Activated T-helper 1 cell treated with anti-CD3 and anti-CD28 coated beads, Interleukin-12 subunit alpha, Interleukin-12 subunit beta, Interleukin-2, Interleukin-4 antibody, amounts not matched to agents 30 ng/mL and 10 ng/mL and 1 ng/mL, durations not matched to agents 14 hours and 24 hours and 36 hours (primary cell): ENCODE measurements at regions of chr2 and their contacts with region 1.

Region 1: GRCh38 chr2:32356735-32357644 is at the start of gene BIRC6:
- DNase-seq: peak; percentile 92
- H3K4me3 Mint-ChIP-seq: peak within 1 kb of the TSS; percentile 89
- H3K27ac Mint-ChIP-seq: peak within 1 kb of the TSS; percentile 96
- H3K4me1 Mint-ChIP-seq: peaks cover 40% of the 10 kb centered on the region
- H3K27me3 Mint-ChIP-seq: no peaks in the 10 kb centered on the region
- total RNA-seq, gene BIRC6: 112 and 123 TPM in 2 replicates

Region 2: DNA sequence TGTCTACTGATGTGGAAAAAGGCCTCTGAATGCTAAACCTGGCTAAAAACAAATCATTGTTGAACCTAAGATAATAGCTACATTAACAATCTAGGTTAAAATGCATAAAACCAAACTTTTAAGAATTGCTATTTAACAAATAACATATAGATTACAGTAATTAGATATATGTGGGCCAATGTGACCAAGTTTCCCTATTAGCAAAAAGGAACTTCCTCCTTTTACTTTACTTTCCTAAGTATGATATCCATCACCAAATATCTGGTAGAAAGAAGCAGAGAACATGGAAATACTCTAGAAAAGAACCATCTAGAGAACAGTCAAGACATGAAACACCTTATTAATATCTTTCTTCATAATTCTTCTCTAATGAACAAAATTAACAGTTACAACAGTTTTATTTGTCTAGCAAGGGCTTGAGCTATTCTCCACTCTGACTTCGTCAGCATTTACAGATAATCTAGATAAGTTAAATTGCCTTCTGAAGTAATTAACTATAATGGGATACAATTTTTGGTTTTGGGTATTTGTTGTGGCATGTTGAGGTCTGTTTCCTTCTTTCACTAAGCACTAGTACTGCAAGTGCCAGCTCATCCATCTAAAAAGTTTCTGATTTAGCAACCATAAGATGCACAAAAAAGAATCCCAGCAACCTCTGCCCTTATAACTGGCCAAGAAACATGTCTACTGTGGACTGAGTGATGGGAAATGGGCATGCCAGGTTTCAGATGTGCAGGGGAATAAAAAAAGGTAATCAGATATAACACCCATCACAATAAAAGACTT is 399.4 kb before region 1 on chr2:
- intact Hi-C with region 1: loop called (anchors 10 kb)
- DNase-seq: no peak
- H3K4me3 Mint-ChIP-seq: no peak overlapping the region
- H3K27ac Mint-ChIP-seq: peak overlapping the region; percentile 19
- H3K4me1 Mint-ChIP-seq: peaks cover 43% of the 10 kb centered on the region
- H3K27me3 Mint-ChIP-seq: no peaks in the 10 kb centered on the region

Region 3: DNA sequence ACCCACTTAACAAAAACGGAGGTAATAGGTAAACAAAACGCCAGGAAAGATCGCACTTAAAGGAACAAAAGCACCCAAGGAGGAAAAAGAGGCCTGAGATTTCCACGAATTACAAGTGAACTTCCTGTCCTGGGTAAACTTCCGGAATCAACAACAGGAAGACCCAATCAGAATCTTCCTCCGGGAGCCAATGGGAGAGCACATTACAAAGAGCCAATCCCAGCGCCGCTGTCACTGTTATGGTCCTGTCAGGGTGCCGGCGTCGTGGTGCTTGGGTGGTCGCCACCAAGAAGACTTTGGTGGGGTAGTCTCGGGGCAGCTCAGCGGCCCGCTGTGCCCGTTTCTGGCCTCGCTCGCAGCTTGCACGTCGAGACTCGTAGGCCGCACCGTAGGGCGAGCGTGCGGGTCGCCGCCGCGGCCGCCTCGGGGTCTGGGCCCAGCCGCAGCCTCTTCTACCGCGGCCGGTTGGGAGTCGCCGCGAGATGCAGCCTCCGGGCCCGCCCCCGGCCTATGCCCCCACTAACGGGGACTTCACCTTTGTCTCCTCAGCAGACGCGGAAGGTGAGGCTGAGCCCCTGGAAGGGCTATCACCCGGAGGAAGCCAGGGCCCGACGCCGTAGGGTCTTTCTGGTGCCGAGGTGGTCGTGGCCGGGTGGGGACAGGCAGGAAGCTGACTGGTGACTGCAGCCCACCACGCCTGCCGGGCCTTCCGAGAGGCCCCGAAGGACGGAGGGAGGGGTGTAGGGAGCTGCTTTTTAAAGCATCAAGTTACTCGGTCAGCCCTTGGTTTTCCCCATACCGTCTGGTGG is 79.1 kb before region 1 on chr2 and contains the start of gene YIPF4:
- intact Hi-C with region 1: loop called (anchors 1 kb)
- DNase-seq: peak; percentile 84
- H3K4me3 Mint-ChIP-seq: peak within 1 kb of the TSS; percentile 89
- H3K27ac Mint-ChIP-seq: peak within 1 kb of the TSS; percentile 85
- H3K4me1 Mint-ChIP-seq: peaks cover 13% of the 10 kb centered on the region
- H3K27me3 Mint-ChIP-seq: peaks cover 4% of the 10 kb centered on the region
- total RNA-seq, gene YIPF4: 39.4 and 42.9 TPM in 2 replicates

Region 4: DNA sequence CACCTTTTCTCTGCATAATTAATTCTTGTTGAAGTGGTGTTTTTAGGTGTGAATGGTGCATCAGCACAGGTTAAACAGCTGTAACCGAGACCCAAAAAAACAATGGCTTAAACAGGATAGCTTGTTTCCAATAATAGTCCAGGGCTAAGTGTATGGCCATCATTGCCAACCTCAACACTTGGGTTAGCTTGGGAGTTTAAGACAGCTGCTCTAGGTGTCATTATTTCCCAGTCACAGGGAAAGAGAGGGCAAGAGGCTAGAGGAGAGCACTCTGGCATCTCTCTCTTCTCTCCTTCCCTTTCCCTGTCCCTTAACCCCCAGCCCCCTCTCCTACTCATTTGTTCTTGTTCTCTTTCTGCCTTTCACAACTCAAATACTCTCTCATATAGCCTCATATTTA is 20.9 kb after region 1 on chr2:
- intact Hi-C with region 1: no loop called
- DNase-seq: no peak
- H3K4me3 Mint-ChIP-seq: no peak overlapping the region
- H3K27ac Mint-ChIP-seq: no peak overlapping the region
- H3K4me1 Mint-ChIP-seq: peaks cover 28% of the 10 kb centered on the region
- H3K27me3 Mint-ChIP-seq: no peaks in the 10 kb centered on the region